MCF 10A (cell line): ENCODE measurements at regions of chr9 and their contacts with region 1.

Region 1: GRCh38 chr9:36632892-36633291 is 60.2 kb downstream of the MELK start:
- DNase-seq: peak; percentile 47
- H3K4me3 Mint-ChIP-seq: no peak overlapping the region
- H3K27ac Mint-ChIP-seq: no peak overlapping the region
- H3K4me1 Mint-ChIP-seq: no peaks in the 10 kb centered on the region
- H3K27me3 Mint-ChIP-seq: no peaks in the 10 kb centered on the region
- CTCF ChIP-seq: peak; percentile 45

Region 2: GRCh38 chr9:36551129-36551528 is 81.8 kb before region 1 on chr9:
- CTCF ChIA-PET with region 1: no interaction called
- POLR2A ChIA-PET with region 1: no interaction called
- intact Hi-C with region 1: no loop called
- DNase-seq: no peak
- H3K4me3 Mint-ChIP-seq: no peak overlapping the region
- H3K27ac Mint-ChIP-seq: no peak overlapping the region
- H3K4me1 Mint-ChIP-seq: peaks cover 5% of the 10 kb centered on the region
- H3K27me3 Mint-ChIP-seq: peaks cover 24% of the 10 kb centered on the region
- CTCF ChIP-seq: no peak

Region 3: GRCh38 chr9:36728651-36729520 is 96.0 kb after region 1 on chr9:
- CTCF ChIA-PET with region 1: interaction called, 9 read pairs
- POLR2A ChIA-PET with region 1: interaction called, 3 read pairs
- intact Hi-C with region 1: loop called (anchors 1 kb)
- DNase-seq: peak; percentile 73
- H3K4me3 Mint-ChIP-seq: no peak overlapping the region
- H3K27ac Mint-ChIP-seq: no peak overlapping the region
- H3K4me1 Mint-ChIP-seq: no peaks in the 10 kb centered on the region
- H3K27me3 Mint-ChIP-seq: peaks cover 9% of the 10 kb centered on the region
- CTCF ChIP-seq: peak; percentile 71

Region 4: GRCh38 chr9:36855448-36856315 is 222.8 kb after region 1 on chr9:
- CTCF ChIA-PET with region 1: interaction called, 4 read pairs
- POLR2A ChIA-PET with region 1: no interaction called
- intact Hi-C with region 1: loop called (anchors 10 kb)
- DNase-seq: peak; percentile 21
- H3K4me3 Mint-ChIP-seq: no peak overlapping the region
- H3K27ac Mint-ChIP-seq: no peak overlapping the region
- H3K4me1 Mint-ChIP-seq: no peaks in the 10 kb centered on the region
- H3K27me3 Mint-ChIP-seq: peaks cover 27% of the 10 kb centered on the region
- CTCF ChIP-seq: no peak